Activated CD4-positive, alpha-beta memory T cell treated with anti-CD3 and anti-CD28 coated beads, Interleukin-2, amount 10 ng/mL, durations not matched to agents 7 days and 5 days (primary cell): ENCODE measurements at regions of chr1 and their contacts with region 1.

Region 1: DNA sequence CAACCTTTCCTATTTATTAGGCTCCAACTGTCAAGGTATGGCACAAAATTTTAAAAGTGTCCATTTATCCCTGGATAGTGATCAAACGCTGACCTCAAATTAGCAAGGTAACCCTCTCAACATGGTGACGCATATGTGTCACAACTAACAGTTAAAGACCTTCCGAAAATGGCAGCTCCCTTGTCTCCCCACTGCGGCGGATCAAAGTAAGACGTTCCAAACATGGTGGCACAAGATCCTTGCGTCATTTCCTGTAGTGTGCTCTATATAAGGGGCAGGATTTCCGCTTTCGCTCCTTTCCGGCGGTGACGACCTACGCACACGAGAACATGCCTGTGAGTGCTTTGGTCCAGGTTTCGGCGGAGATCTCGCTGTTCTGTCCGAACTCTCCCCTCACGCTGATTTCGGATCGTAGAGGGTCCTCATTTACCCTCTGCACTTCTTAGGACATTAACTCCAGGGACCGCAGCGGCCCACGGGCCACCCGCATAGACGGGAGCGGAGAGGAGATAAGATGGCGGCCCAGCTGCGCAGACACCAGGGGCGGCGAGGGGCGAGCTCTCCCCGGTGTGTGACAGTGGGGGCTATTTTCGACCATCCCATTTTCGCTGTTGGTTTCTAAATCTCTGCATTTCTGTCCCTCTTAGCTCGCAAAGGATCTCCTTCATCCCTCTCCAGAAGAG is at the start of gene RPS27:
- DNase-seq: peak; percentile 91
- H3K4me3 Mint-ChIP-seq: peak within 1 kb of the TSS; percentile 90
- H3K27ac Mint-ChIP-seq: peak within 1 kb of the TSS; percentile 90
- H3K4me1 Mint-ChIP-seq: peaks cover 49% of the 10 kb centered on the region
- H3K27me3 Mint-ChIP-seq: no peaks in the 10 kb centered on the region
- total RNA-seq, gene RPS27: 2,022 to 2,087 TPM

Region 2: GRCh38 chr1:153141377-153141776 is 849.2 kb before region 1 on chr1:
- CTCF ChIA-PET with region 1: no interaction called
- POLR2A ChIA-PET with region 1: no interaction called
- DNase-seq: no peak
- H3K4me3 Mint-ChIP-seq: no peak overlapping the region
- H3K27ac Mint-ChIP-seq: no peak overlapping the region
- H3K4me1 Mint-ChIP-seq: no peaks in the 10 kb centered on the region
- H3K27me3 Mint-ChIP-seq: peaks cover 40% of the 10 kb centered on the region

Region 3: DNA sequence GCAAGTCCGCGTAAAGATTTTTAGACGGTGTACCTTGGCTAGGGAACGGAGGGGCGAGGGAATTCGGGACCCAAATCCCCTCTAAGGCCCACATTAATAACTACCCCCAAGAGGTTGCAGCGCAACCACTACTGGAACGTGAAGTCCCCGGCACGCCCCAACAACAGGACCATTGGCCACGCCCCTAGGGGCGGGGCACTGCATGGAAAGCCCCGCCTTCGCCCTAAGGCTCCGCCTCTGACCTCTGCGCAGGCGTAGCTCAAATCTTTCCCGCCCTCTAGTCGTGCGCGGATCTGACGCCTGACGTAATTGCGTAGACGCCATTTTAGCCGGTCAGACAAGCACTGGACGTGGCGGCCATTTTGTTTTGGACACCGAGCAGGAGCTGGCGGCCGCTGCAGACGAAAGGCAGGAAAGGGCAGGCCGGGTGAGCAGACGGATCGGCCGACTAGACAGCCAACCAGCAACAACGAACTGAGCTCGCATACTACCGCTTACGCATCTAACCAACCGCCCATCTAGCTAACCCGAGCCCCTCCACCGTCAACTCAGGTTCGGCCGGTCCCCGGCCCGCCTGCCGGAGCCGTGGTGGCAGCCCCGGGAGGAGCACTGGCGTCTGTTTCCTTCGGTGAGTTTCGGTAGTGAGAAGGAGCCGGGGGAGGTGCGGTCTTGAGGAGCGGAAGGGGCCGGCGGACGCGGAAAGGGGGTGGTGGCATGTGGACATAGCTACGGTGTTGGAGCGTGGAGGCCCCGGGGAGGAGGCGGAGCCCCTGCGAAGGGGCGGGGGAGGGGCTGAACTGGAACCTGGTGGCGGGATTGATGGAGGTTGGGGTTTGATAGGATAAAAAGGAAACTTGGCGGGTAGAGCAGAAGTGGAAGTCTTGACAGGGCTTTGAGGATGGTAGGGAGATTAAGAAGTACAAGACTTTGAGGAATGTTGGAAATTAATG is 356.6 kb before region 1 on chr1 and contains the start of gene CHTOP:
- CTCF ChIA-PET with region 1: no interaction called
- POLR2A ChIA-PET with region 1: interaction called, 22 read pairs
- DNase-seq: peak; percentile 98
- H3K4me3 Mint-ChIP-seq: peak within 1 kb of the TSS; percentile 97
- H3K27ac Mint-ChIP-seq: peak within 1 kb of the TSS; percentile 100
- H3K4me1 Mint-ChIP-seq: peaks cover 48% of the 10 kb centered on the region
- H3K27me3 Mint-ChIP-seq: no peaks in the 10 kb centered on the region
- total RNA-seq, gene CHTOP: 84.7 to 87.1 TPM

Region 4: DNA sequence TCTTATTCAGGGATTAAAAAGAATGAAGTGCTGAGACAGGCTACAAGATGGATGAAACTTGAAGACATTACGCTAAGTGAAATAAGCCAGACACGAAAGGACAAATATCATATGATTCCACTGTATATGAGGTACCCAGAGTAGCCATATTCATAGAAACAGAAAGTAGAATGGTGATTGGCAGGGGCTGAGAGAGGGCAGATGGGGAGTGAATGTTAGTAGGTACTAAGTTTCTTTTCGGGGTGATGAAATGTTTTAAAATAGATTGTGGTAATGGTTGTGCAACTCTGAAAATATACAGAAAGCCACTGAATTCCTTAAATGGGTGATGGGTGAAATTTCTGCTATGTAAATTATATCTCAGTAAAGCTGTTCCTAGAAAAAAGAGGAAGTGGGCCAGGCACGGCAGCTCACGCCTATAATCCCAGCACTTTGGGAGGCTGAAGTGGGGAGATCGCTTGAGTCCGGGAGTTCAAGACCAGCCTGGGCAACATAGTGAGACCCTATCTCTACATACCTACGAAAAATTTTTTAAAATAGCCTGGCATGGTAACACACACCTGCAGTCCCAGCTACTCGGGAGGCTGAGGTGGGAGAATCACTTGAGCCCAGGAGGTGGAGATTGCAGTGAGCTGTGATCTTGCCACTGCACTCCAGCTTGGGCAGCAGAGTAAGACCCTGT is 199.5 kb before region 1 on chr1:
- CTCF ChIA-PET with region 1: interaction called, 43 read pairs
- POLR2A ChIA-PET with region 1: interaction called, 5 read pairs
- DNase-seq: no peak
- H3K4me3 Mint-ChIP-seq: peak overlapping the region; percentile 2
- H3K27ac Mint-ChIP-seq: peak overlapping the region; percentile 62
- H3K4me1 Mint-ChIP-seq: peaks cover 42% of the 10 kb centered on the region
- H3K27me3 Mint-ChIP-seq: peaks cover 18% of the 10 kb centered on the region

Region 5: DNA sequence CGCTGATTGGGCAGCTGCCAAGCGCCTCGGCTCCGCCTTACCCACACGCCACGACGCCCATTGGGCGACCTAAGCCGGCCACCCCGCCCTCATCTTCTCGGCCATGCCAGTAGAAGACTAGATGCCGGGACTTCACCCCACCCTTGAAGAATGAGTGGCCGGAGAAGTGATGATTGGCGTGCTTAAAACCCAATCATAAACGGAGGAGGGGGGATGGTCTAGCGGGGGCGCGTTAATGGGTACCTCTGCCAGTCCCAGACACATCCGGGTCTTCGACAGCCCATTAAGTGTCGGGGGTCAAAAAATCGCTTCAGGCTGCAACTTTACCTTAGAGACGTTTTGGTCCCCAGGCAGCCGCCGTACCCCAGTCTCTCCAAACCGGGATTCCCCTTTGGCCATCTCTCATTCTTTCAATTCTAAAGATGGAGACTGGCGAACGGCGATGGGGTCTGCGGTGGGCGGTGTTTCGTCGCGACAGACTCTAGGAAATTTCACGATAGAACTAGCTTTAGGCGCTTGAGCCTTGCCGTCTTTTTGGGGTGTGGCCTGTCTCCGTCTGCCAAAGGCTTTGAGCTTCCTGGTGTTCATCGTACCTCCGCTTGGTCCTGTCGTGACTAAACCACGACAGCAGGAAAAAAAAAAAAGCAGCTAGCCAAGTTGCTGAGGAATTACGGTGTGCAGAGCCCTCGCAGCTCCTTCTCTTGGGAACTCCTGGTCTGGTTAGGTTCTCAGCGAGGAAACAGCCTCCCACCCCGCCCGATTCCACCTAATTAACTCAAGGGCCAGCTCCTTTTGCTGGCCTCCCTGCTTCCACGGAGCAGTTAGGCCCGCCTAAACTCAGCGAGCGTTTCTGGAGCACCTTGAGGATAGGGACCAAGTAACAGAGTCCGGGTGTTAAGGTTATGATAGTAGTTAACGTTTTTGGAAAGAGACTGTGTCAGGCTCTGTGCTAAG is 67.4 kb before region 1 on chr1 and contains the start of gene GATAD2B:
- CTCF ChIA-PET with region 1: interaction called, 10 read pairs
- POLR2A ChIA-PET with region 1: interaction called, 31 read pairs
- DNase-seq: peak; percentile 99
- H3K4me3 Mint-ChIP-seq: peak within 1 kb of the TSS; percentile 92
- H3K27ac Mint-ChIP-seq: peak within 1 kb of the TSS; percentile 88
- H3K4me1 Mint-ChIP-seq: peaks cover 42% of the 10 kb centered on the region
- H3K27me3 Mint-ChIP-seq: no peaks in the 10 kb centered on the region
- total RNA-seq, gene GATAD2B: 70.8 to 71.1 TPM

Region 6: DNA sequence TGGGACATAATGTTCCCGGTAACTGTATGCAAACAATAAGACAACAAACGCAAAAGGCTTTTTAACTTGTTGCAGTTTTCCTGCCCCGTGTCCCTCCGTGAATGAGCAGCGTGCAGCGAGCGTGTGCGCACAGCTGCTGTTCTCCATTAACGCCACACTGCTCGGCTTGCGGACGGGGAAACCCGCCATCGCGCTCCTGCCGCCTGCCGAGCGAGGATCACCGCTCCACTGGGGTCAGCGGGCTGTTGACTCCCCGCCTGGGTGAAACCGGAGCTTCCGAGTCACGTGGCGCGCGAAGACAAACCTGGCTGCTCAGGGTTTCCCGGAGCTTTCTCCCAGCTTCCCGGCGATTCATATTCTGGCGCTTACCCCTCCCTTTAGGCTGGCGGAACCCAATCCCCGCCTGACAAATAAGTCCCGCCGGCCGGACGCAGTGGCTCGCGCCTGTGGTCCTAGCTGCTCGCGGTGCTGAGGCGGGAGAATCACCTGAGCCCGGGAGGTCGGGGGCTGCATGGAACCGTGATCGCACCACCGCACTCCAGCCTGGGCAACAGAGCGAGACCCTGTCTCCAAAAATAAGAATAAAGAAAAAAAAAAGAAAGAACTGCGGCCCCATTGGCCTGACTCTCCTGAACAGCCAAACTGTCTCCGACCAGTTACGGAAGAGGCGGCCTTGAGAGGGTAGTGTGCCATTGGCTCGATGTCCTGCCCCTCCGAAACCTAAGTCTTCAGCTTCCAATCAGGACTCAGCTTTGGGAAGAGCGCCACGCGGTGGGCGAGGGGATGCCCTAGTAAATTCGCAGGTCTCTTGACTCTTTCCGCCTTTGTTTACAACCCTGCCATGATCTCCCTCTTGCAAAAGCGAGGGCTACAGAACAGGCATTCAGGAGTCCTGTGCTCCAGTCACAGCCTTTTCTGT is 23.3 kb before region 1 on chr1 and contains the start of gene CREB3L4:
- CTCF ChIA-PET with region 1: interaction called, 21 read pairs
- POLR2A ChIA-PET with region 1: interaction called, 40 read pairs
- DNase-seq: peak; percentile 87
- H3K4me3 Mint-ChIP-seq: peak within 1 kb of the TSS; percentile 80
- H3K27ac Mint-ChIP-seq: peak within 1 kb of the TSS; percentile 84
- H3K4me1 Mint-ChIP-seq: peaks cover 63% of the 10 kb centered on the region
- H3K27me3 Mint-ChIP-seq: no peaks in the 10 kb centered on the region
- total RNA-seq, gene CREB3L4: 7.0 to 8.4 TPM

Region 7: GRCh38 chr1:154183045-154183915 is 192.7 kb after region 1 on chr1:
- CTCF ChIA-PET with region 1: no interaction called
- POLR2A ChIA-PET with region 1: interaction called, 24 read pairs
- DNase-seq: peak; percentile 96
- H3K4me3 Mint-ChIP-seq: peak overlapping the region; percentile 99
- H3K27ac Mint-ChIP-seq: peak overlapping the region; percentile 99
- H3K4me1 Mint-ChIP-seq: peaks cover 45% of the 10 kb centered on the region
- H3K27me3 Mint-ChIP-seq: no peaks in the 10 kb centered on the region